B cell (primary cell): ENCODE measurements at regions of chr22 and their contacts with region 1.

Region 1: DNA sequence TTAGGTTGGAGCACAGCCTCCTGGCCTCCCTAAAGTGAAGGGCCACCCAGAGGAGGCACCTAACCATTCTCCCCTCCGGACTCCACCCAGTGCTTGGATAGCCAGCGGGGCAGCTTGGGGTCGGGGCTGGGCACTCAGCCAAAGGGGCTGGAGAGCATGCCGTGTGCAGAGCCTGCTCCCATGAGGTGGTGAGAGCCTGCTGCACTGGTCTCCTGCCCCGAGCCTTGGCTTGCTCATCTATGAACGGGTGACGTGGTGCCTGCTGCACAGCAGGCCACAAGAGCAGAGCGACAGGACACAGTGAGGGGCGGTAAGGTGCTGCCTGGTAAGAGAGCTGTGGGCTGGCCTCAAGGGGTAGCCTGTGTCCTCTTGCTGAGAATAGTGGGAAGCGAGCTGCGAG is 14.0 kb upstream of the CCDC188 start:
- DNase-seq: no peak
- ATAC-seq: no peak
- H3K4me3 ChIP-seq: no peak overlapping the region
- H3K4me3 Mint-ChIP-seq: no peak overlapping the region
- H3K27ac ChIP-seq: no peak overlapping the region
- H3K27ac Mint-ChIP-seq: no peak overlapping the region
- H3K4me1 ChIP-seq: no peaks in the 10 kb centered on the region
- H3K4me1 Mint-ChIP-seq: no peaks in the 10 kb centered on the region
- H3K27me3 ChIP-seq: no peaks in the 10 kb centered on the region
- H3K27me3 Mint-ChIP-seq: no peaks in the 10 kb centered on the region
- CTCF ChIP-seq: no peak

Region 2: DNA sequence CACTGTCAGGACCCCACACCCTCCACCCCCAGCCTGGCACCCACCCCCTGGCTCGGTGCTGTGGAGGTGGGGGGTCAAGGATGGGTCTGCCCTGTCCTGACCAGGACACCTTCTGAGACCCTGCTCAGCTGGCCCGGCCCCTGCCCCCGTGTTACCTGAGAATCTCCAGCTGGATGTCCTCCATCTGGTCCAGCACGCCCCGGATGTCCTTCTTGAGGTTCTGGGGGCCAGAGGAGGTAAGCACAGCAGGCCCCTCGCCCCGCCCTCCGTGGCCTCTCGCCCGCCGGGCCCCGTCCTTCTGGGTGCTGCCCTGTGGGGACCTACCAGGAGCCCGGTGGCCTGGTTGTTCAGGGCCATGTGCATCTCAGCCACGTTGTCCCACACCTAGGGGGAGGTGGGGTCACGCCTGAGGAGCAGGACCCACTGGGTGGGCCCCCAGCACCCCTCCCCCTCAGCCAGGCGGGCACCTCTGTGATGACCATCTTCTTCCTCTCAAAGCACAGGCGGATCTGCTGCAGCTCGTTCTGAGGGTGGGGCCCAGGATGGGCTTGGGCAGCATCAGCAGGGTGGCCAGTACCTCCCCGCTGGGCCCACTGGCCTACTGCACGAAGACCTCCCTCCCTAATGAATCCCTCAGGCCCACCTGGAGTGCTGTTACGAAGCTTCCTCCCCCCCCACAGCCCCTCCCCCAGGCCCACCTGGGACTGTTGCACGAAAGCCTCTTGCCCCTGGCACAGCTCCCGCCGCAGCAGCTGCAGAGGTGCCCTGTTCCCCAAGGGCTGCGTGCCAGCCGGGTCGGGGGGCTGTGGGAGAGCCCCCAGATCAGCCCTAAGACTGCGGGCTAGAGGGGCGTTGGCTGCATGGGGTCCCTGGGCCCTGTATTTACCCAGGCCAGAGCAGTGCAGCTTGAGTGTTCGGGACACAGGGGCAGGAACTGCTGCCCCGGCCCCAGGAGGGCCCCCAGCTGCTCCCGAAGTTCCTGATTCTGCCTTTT is 15.3 kb before region 1 on chr22:
- CTCF ChIA-PET with region 1: no interaction called
- POLR2A ChIA-PET with region 1: no interaction called
- intact Hi-C with region 1: no loop called
- DNase-seq: no peak
- ATAC-seq: no peak
- H3K4me3 ChIP-seq: no peak overlapping the region
- H3K4me3 Mint-ChIP-seq: no peak overlapping the region
- H3K27ac ChIP-seq: no peak overlapping the region
- H3K27ac Mint-ChIP-seq: no peak overlapping the region
- H3K4me1 ChIP-seq: peaks cover 0 to 3% of the 10 kb centered on the region in 2 donors
- H3K4me1 Mint-ChIP-seq: peaks cover 4% of the 10 kb centered on the region
- H3K27me3 ChIP-seq: no peaks in the 10 kb centered on the region
- H3K27me3 Mint-ChIP-seq: no peaks in the 10 kb centered on the region
- CTCF ChIP-seq: no peak

Region 3: GRCh38 chr22:20174785-20175596 is 10.1 kb after region 1 on chr22:
- CTCF ChIA-PET with region 1: no interaction called
- POLR2A ChIA-PET with region 1: no interaction called
- intact Hi-C with region 1: no loop called
- DNase-seq: no peak
- ATAC-seq: no peak
- H3K4me3 ChIP-seq: no peak overlapping the region
- H3K4me3 Mint-ChIP-seq: no peak overlapping the region
- H3K27ac ChIP-seq: no peak overlapping the region
- H3K27ac Mint-ChIP-seq: no peak overlapping the region
- H3K4me1 ChIP-seq: no peaks in the 10 kb centered on the region
- H3K4me1 Mint-ChIP-seq: no peaks in the 10 kb centered on the region
- H3K27me3 ChIP-seq: no peaks in the 10 kb centered on the region
- H3K27me3 Mint-ChIP-seq: peaks cover 3% of the 10 kb centered on the region
- CTCF ChIP-seq: no peak

Region 4: DNA sequence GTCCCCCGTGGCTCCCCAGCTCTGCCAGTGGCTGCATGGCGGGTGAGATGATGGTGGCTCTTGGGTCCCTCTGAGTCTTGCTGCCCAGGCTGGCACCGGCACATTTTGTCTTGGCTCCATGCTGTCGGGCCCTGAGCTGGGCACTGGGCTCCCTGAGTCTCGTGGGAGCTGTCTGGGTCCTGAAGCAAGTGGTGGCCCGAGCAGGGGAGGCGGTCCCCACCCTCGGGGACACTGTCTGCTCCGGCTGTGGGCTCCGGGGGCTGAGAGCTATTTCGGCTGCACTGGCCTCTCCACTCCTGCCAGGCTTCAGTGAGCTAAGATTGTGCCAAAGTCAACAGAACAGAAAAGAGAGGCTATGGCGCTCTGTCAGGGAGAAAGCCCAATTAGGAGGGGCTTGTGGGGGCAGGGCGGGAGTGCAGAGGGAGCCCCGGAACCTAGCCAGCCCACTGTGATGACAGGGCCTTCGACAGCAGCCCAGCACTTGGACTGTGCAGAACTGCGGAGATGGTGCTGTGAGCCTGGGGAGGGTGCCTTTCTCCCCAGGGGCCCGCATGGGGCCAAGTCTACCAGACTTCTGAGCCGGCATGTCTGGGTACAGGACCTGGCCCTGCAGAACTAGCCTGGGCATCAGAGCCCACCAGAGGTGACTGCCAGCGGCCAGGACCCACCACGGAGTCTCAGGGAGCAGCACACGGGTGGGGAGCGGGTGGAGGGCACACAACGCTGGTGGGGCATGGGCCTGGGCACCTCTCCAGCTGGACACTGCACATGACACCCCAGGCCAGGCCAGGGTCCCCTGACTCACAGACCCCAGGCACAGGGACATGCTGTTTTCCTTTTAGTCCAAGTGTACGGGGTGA is 65.3 kb after region 1 on chr22:
- CTCF ChIA-PET with region 1: no interaction called
- POLR2A ChIA-PET with region 1: no interaction called
- intact Hi-C with region 1: loop called (anchors 5 kb)
- DNase-seq: no peak
- ATAC-seq: no peak
- H3K4me3 ChIP-seq: no peak overlapping the region
- H3K4me3 Mint-ChIP-seq: no peak overlapping the region
- H3K27ac ChIP-seq: no peak overlapping the region
- H3K27ac Mint-ChIP-seq: no peak overlapping the region
- H3K4me1 ChIP-seq: no peaks in the 10 kb centered on the region
- H3K4me1 Mint-ChIP-seq: no peaks in the 10 kb centered on the region
- H3K27me3 ChIP-seq: no peaks in the 10 kb centered on the region
- H3K27me3 Mint-ChIP-seq: no peaks in the 10 kb centered on the region
- CTCF ChIP-seq: no peak

Region 5: DNA sequence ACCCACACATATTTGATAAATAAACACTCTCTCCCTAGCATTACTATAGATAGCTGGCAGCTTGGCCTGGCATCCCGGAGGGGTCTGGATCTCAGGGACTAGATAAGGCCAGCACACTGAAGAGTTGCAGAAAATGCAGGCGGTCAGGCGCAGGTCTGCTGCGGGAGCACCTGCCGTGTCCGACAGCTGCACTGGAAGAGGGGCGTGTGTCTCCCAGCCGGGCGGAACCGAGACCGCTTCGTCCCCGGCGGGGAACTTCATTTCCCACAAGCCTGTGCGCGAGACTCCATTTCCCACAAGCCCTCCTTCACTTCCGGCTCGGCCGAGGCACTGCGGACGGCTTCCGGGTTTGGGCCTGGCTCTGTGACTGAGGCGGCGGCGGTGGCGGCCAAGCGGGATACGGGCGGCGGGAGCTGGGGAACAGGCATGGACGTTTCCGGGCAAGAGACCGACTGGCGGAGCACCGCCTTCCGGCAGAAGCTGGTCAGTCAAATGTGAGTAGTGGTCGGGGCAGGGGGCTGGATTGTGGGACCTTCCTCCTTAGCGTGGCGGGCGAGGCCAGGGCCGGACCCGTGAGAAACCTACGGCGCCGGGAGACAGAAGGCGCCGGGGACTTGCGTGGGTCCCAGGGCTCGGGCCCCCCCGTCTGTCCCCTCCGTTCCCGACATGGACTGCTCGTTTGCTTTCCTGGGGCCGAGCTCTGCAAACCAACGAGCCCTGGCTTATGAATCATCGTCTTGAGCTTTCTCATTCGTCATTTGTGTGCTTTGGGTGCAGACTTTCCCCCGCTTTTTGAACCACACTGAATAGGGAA is 342.6 kb after region 1 on chr22 and contains the start of gene MED15:
- CTCF ChIA-PET with region 1: no interaction called
- POLR2A ChIA-PET with region 1: no interaction called
- intact Hi-C with region 1: no loop called
- DNase-seq: peak; percentile 92
- ATAC-seq: peak; percentile 85
- H3K4me3 ChIP-seq: peak within 1 kb of the TSS; percentile 77 to 97 (median 87)
- H3K4me3 Mint-ChIP-seq: peak within 1 kb of the TSS; percentile 97
- H3K27ac ChIP-seq: peak within 1 kb of the TSS; percentile 87 to 96
- H3K27ac Mint-ChIP-seq: peak within 1 kb of the TSS; percentile 99
- H3K4me1 ChIP-seq: peaks cover 32 to 39% of the 10 kb centered on the region in 2 donors
- H3K4me1 Mint-ChIP-seq: peaks cover 51% of the 10 kb centered on the region
- H3K27me3 ChIP-seq: no peaks in the 10 kb centered on the region
- H3K27me3 Mint-ChIP-seq: no peaks in the 10 kb centered on the region
- CTCF ChIP-seq: no peak
- total RNA-seq, gene MED15: 134 and 156 TPM in 2 replicates